ENCODE measurements at regions of chr20 and their contacts with region 1.

Region 1: GRCh38 chr20:9609887-9610502 is 95.6 kb downstream of the LAMP5 start:
- DNase-seq: peak; percentile 57
- H3K4me3 ChIP-seq: no peak overlapping the region
- H3K27ac ChIP-seq: no peak overlapping the region
- H3K4me1 ChIP-seq: no peaks in the 10 kb centered on the region
- H3K27me3 ChIP-seq: peaks cover 2% of the 10 kb centered on the region
- CTCF ChIP-seq: peak; percentile 50 to 57

Region 2: GRCh38 chr20:9407805-9408421 is 202.1 kb before region 1 on chr20:
- CTCF ChIA-PET with region 1: interaction called, 37 read pairs
- dilution Hi-C with region 1: loop called (anchors 25 kb)
- in situ Hi-C with region 1: loop called (anchors 5 kb)
- intact Hi-C with region 1: loop called (anchors 1 kb)
- DNase-seq: peak; percentile 53
- H3K4me3 ChIP-seq: no peak overlapping the region
- H3K27ac ChIP-seq: no peak overlapping the region
- H3K4me1 ChIP-seq: peaks cover 9% of the 10 kb centered on the region
- H3K27me3 ChIP-seq: no peaks in the 10 kb centered on the region
- CTCF ChIP-seq: peak; percentile 71 to 80

Region 3: DNA sequence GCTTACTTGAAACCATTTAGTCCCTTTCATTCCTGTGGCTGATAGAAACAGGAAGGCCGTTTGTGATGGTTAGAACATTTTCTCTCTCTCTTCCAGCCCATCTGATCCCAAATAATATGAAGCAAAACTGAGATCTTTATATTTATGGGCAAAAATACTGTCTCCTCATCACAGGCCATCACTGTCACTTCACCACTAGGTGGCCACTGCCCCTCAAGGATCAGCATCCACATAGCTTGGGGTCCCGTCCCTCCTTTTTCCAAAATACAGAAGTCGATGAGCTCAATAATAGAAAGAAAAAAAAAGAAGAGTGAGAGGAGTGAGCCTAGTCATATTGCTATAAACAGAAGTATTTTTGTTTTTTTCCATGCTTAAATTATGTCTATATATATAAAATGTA is 142.0 kb before region 1 on chr20:
- CTCF ChIA-PET with region 1: no interaction called
- dilution Hi-C with region 1: no loop called
- in situ Hi-C with region 1: no loop called
- intact Hi-C with region 1: loop called (anchors 1 kb)
- DNase-seq: no peak
- H3K4me3 ChIP-seq: no peak overlapping the region
- H3K27ac ChIP-seq: no peak overlapping the region
- H3K4me1 ChIP-seq: no peaks in the 10 kb centered on the region
- H3K27me3 ChIP-seq: no peaks in the 10 kb centered on the region
- CTCF ChIP-seq: peak; percentile 61 to 67

Measured in mammary epithelial cell (primary cell).